ENCODE measurements at regions of chr5 and their contacts with region 1.

Region 1: GRCh38 chr5:150656191-150657132 is 4.6 kb upstream of the MYOZ3 start:
- DNase-seq: no peak
- H3K4me3 ChIP-seq: peak overlapping the region; percentile 59 to 74 (median 62)
- H3K27ac ChIP-seq: peak overlapping the region; percentile 76 to 81 (median 76)
- H3K4me1 ChIP-seq: peaks cover 61 to 75% (median 67%) of the 10 kb centered on the region in 4 donors
- H3K27me3 ChIP-seq: no peaks in the 10 kb centered on the region
- CTCF ChIP-seq: peak; percentile 60 to 85 (median 79)
- EP300 ChIP-seq: no peak
- POLR2A ChIP-seq: peak; percentile 12

Region 2: GRCh38 chr5:149765932-149766331 is 890.5 kb before region 1 on chr5:
- intact Hi-C with region 1: no loop called
- DNase-seq: no peak
- H3K4me3 ChIP-seq: no peak overlapping the region
- H3K27ac ChIP-seq: no peak overlapping the region
- H3K4me1 ChIP-seq: peaks cover 10 to 54% (median 39%) of the 10 kb centered on the region in 4 donors
- H3K27me3 ChIP-seq: no peaks in the 10 kb centered on the region
- CTCF ChIP-seq: peak in 1 of 3 experiments; percentile 30
- EP300 ChIP-seq: no peak
- POLR2A ChIP-seq: no peak

Region 3: GRCh38 chr5:150458819-150459557 is 197.5 kb before region 1 on chr5:
- intact Hi-C with region 1: loop called (anchors 5 kb)
- DNase-seq: peak; percentile 94
- H3K4me3 ChIP-seq: peak overlapping the region; percentile 26 to 44 (median 35)
- H3K27ac ChIP-seq: peak overlapping the region in 1 of 4 donors; percentile 10
- H3K4me1 ChIP-seq: peaks cover 9 to 21% (median 17%) of the 10 kb centered on the region in 4 donors
- H3K27me3 ChIP-seq: no peaks in the 10 kb centered on the region
- CTCF ChIP-seq: peak; percentile 77 to 93 (median 88)
- EP300 ChIP-seq: no peak
- POLR2A ChIP-seq: no peak

Region 4: DNA sequence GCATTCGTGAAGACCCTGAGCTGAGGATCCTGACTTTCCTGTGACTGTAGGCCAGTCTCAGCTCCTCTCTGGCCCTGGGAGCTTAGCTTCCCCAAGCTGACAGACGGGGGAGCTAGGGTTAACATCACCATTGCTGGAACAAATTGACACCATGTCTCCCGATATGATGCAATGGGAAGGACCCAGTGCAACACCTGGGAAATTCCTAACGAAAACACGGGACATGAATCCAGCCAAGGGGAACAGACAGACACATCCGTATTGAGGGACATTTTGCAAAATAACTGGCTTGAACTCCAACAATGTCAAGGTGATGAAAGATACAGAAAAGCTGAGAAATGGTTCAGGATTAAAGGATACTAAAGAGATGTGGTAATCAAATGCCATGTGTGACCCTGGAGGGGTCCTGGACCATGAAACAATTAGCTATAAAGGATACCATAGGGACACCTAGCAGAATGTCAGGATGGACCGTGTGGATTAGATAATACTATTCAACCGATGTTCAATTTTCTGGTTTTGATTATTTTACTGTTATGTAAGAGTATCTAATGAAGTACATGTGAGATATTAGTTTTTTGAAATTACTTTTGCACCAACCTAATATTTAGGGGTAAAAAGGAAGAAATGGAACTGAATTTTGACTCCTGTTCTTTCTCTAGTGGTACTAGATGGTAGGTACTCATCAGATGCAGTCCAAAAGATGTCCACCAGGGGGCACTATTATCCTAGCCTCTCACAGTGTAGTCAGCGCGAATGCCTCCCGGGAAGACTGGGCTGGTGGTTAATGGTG is 95.9 kb before region 1 on chr5:
- intact Hi-C with region 1: loop called (anchors 1 kb)
- DNase-seq: peak; percentile 98
- H3K4me3 ChIP-seq: no peak overlapping the region
- H3K27ac ChIP-seq: no peak overlapping the region
- H3K4me1 ChIP-seq: peaks cover 0 to 20% (median 4%) of the 10 kb centered on the region in 4 donors
- H3K27me3 ChIP-seq: no peaks in the 10 kb centered on the region
- CTCF ChIP-seq: peak; percentile 89 to 97 (median 89)
- EP300 ChIP-seq: no peak
- POLR2A ChIP-seq: no peak

Region 5: GRCh38 chr5:150589871-150590601 is 66.4 kb before region 1 on chr5:
- intact Hi-C with region 1: loop called (anchors 2 kb)
- DNase-seq: no peak
- H3K4me3 ChIP-seq: no peak overlapping the region
- H3K27ac ChIP-seq: peak overlapping the region; percentile 51 to 64 (median 56)
- H3K4me1 ChIP-seq: peaks cover 34 to 47% (median 45%) of the 10 kb centered on the region in 4 donors
- H3K27me3 ChIP-seq: no peaks in the 10 kb centered on the region
- CTCF ChIP-seq: peak; percentile 77 to 79 (median 79)
- EP300 ChIP-seq: no peak
- POLR2A ChIP-seq: no peak

Region 6: DNA sequence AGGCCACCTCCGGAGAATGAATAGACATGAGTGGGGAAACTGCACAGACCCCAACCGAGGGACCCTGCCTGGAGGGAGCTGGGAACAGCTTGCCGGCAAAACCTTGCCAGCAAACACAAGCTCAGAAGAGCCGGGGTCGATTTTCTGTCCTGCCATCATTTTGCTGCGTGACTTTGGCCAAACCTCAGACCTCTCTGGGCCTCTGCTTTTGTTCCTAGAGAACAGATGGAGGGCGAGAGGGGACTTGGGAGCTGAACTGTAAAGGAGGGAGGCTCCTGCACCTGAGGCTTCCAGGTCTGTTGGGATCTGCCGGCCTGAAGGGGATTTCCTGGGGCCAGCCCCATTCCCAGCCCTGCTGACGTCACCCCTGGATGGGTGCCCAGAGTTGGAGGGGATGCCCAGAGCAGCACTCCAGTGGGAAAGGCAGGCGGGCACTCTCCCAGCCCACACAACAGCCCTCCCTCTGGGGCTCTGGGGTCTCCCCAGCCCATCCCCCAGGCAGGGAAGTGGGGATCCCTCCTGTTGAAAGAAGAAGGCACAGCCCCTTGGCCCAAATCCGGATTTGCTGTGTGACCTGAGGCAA is 56.5 kb before region 1 on chr5:
- intact Hi-C with region 1: loop called (anchors 2 kb)
- DNase-seq: no peak
- H3K4me3 ChIP-seq: no peak overlapping the region
- H3K27ac ChIP-seq: peak overlapping the region in 3 of 4 donors; percentile 16 to 54 (median 51)
- H3K4me1 ChIP-seq: peaks cover 30 to 58% (median 34%) of the 10 kb centered on the region in 4 donors
- H3K27me3 ChIP-seq: no peaks in the 10 kb centered on the region
- CTCF ChIP-seq: no peak
- EP300 ChIP-seq: no peak
- POLR2A ChIP-seq: no peak

Region 7: GRCh38 chr5:150637245-150638052 is 19.0 kb before region 1 on chr5:
- intact Hi-C with region 1: loop called (anchors 1 kb)
- DNase-seq: no peak
- H3K4me3 ChIP-seq: no peak overlapping the region
- H3K27ac ChIP-seq: peak overlapping the region; percentile 78 to 85 (median 79)
- H3K4me1 ChIP-seq: peaks cover 73 to 87% (median 76%) of the 10 kb centered on the region in 4 donors
- H3K27me3 ChIP-seq: no peaks in the 10 kb centered on the region
- CTCF ChIP-seq: no peak
- EP300 ChIP-seq: no peak
- POLR2A ChIP-seq: no peak